Activated CD4-positive, alpha-beta memory T cell treated with anti-CD3 and anti-CD28 coated beads for 36 hours (primary cell): ENCODE measurements at regions of chr1 and their contacts with region 1.

Region 1: DNA sequence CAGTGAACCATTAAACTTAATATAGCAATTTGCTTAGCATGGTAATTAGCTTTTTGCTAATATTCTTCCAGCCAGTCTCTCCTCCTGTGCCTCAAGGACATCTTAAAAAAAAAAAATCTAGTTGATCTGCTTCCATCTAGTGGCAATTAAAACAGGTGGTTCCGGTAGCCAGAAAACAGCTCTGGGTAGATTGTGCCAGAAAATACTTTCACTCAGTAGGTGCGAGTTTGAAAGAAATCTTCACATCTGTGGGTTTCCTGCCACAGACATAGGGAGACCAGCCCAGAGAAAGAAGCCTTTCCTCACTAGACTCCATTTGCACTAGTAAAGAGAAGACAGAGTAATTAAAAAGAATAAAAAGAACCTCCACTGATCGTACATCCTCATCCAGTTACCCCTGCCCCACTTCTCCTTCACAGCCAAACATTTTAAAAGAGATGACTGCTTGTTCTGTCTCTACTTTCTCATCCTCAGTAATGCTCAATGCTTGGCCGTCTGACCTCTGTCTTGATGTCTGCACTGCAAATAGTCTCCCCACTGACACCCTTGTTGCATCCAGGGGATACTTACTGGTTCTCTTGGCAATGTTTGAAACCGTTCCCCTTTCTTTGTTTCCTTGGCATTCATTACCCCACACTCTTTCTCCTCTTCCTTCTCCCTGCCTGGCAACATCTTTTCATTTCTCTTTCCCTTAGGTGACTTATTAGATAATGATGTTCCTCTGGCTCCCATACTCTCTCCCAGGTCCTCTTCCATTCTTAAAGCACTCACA is 16.9 kb downstream of the SELL start:
- DNase-seq: peak; percentile 46
- H3K4me3 Mint-ChIP-seq: peak overlapping the region; percentile 9
- H3K27ac Mint-ChIP-seq: peak overlapping the region; percentile 88
- H3K4me1 Mint-ChIP-seq: peaks cover 96% of the 10 kb centered on the region
- H3K27me3 Mint-ChIP-seq: no peaks in the 10 kb centered on the region

Region 2: DNA sequence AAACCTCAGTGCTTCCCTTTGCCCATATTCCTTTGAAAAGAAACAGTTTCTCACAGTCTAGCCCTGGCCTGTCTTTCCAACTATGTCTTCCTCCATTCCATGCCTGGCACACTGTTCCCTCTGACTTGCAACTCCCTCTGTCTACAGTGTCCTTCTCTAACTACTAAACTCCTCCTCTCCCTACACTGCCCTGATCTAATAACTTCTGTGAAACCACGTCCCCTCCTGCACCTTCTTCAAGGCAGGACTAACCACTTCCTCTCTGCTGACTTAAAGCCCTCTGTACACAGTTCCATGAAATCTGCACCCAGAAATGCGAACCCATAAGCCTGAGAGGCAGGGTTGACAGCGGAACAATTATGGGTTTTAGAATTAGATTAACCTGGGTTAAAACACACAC is 650.2 kb before region 1 on chr1:
- CTCF ChIA-PET with region 1: no interaction called
- POLR2A ChIA-PET with region 1: no interaction called
- intact Hi-C with region 1: loop called (anchors 10 kb)
- DNase-seq: peak; percentile 57
- H3K4me3 Mint-ChIP-seq: no peak overlapping the region
- H3K27ac Mint-ChIP-seq: peak overlapping the region; percentile 35
- H3K4me1 Mint-ChIP-seq: peaks cover 53% of the 10 kb centered on the region
- H3K27me3 Mint-ChIP-seq: no peaks in the 10 kb centered on the region

Region 3: DNA sequence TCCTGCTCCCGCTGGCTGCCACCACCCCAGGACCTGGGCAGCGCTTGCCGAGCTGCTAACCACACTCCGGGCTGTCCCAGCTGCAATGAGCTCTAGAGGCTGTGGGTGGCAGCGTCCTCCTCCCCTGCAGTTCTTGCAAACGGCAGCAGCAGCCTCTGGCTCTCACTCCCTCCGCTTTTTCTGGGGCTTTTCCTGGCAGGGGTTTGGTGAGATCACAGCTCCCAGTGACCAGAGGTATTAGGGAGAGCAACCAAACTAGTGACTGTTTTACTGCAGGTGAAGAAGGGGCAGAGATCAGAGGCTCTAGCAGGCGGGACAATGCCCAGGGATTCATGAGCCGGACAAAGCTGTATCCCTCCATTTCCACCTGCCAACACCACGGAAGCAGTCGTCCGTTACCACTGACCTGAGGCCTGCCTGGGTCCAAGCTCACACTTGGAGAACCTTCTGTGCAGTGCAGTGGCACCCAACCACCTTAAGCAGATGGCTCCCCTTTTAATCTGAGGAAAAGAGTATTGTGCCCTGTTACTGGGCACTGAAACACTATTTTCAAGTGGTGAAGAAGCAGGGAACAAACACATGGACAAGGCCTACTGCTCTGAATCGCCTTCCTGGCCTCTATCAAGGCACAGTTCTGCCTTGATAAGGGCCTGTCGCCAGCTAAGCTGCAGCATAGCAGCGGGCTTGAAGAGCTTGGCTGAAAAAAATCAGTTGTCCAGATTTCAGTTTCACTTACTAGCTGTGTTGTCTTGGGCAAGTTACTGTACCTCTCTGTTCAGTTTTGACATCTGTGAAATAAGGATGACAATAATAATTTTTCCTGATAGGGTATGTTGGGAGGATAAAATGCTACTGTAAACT is 107.9 kb before region 1 on chr1 and contains the start of gene F5:
- CTCF ChIA-PET with region 1: interaction called, 69 read pairs
- POLR2A ChIA-PET with region 1: interaction called, 27 read pairs
- intact Hi-C with region 1: loop called (anchors 1 kb)
- DNase-seq: peak; percentile 90
- H3K4me3 Mint-ChIP-seq: peak within 1 kb of the TSS; percentile 96
- H3K27ac Mint-ChIP-seq: peak within 1 kb of the TSS; percentile 94
- H3K4me1 Mint-ChIP-seq: peaks cover 61% of the 10 kb centered on the region
- H3K27me3 Mint-ChIP-seq: no peaks in the 10 kb centered on the region
- total RNA-seq, gene F5: 50.8 to 51.1 TPM

Region 4: GRCh38 chr1:169670836-169671235 is 23.7 kb before region 1 on chr1:
- CTCF ChIA-PET with region 1: interaction called, 4 read pairs
- POLR2A ChIA-PET with region 1: no interaction called
- intact Hi-C with region 1: loop called (anchors 1 kb)
- DNase-seq: no peak
- H3K4me3 Mint-ChIP-seq: no peak overlapping the region
- H3K27ac Mint-ChIP-seq: peak overlapping the region; percentile 59
- H3K4me1 Mint-ChIP-seq: peaks cover 47% of the 10 kb centered on the region
- H3K27me3 Mint-ChIP-seq: no peaks in the 10 kb centered on the region

Region 5: GRCh38 chr1:169794530-169795416 is 100.3 kb after region 1 on chr1 and contains the start of gene METTL18:
- CTCF ChIA-PET with region 1: no interaction called
- POLR2A ChIA-PET with region 1: interaction called, 4 read pairs
- intact Hi-C with region 1: loop called (anchors 2 kb)
- DNase-seq: peak; percentile 96
- H3K4me3 Mint-ChIP-seq: peak within 1 kb of the TSS; percentile 100
- H3K27ac Mint-ChIP-seq: peak within 1 kb of the TSS; percentile 99
- H3K4me1 Mint-ChIP-seq: peaks cover 44% of the 10 kb centered on the region
- H3K27me3 Mint-ChIP-seq: no peaks in the 10 kb centered on the region
- total RNA-seq, gene METTL18: 10.8 to 10.9 TPM

Region 6: DNA sequence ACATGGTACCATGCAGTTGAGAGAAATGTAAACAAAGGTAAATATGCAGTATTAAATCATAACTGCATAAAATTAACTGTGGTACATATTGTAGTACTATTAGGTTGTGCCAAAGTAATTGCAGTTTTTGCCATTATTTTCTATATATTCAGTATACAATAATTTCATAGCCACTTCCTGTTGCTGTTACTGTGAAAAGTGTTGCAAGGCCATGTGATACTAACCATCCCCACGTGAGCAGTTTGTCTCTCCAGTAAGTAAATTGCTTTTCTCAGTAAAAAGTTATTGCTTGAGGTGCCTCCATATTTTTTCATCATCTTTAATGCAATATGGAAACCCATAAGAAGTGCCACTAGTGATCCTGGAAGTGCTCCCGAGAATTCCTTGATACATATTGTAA is 119.8 kb after region 1 on chr1:
- CTCF ChIA-PET with region 1: no interaction called
- POLR2A ChIA-PET with region 1: no interaction called
- intact Hi-C with region 1: no loop called
- DNase-seq: no peak
- H3K4me3 Mint-ChIP-seq: no peak overlapping the region
- H3K27ac Mint-ChIP-seq: no peak overlapping the region
- H3K4me1 Mint-ChIP-seq: no peaks in the 10 kb centered on the region
- H3K27me3 Mint-ChIP-seq: no peaks in the 10 kb centered on the region

Region 7: GRCh38 chr1:170067253-170067819 is 372.8 kb after region 1 on chr1:
- CTCF ChIA-PET with region 1: no interaction called
- POLR2A ChIA-PET with region 1: no interaction called
- intact Hi-C with region 1: loop called (anchors 5 kb)
- DNase-seq: no peak
- H3K4me3 Mint-ChIP-seq: no peak overlapping the region
- H3K27ac Mint-ChIP-seq: no peak overlapping the region
- H3K4me1 Mint-ChIP-seq: peaks cover 53% of the 10 kb centered on the region
- H3K27me3 Mint-ChIP-seq: no peaks in the 10 kb centered on the region